Caco-2 (cell line): ENCODE measurements at regions of chr9 and their contacts with region 1.

Region 1: DNA sequence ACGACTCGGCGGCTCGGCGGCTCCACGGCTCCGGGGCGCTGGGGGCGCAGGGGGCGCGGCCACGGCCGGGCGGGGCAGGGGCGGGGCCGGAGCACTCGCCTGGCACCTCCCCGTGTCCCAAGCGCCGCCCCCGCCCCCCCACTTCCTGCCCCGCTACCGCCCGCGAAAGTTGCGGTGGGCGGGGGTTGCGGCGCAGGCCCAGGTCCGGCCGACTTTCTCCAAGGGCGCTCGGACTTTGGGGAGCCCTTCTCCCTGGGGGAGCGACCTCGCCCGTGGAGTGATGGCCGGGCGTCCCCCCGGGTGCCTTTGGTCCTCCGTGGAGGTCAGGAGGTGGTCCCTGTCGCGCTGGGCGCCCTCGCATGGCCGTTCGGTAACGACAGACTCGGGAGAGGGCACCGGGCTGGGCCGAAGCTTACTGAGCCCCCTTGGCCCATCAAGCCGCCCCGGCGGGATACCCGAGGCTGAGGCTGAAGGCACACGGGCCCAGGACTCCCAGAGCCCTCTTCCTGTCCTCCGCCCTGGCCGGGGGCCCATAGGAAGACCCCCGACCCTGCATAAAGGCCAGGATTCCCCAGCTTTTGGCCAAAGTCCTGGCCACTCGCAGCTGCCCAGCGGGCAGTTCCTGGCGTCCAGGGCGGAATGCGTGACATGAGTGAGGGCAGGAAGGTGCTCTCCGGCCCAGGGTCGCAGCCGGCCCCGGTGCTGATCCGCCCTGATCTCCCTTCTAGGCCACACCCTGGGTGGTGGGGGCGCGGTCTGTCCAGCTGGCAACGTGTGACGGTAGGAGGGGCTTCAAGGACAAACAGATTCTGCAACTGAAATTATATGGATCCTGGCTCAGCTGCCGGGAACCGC is 883 bp upstream of the VAV2 start:
- DNase-seq: peak; percentile 79 to 88
- H3K4me3 ChIP-seq: peak overlapping the region; percentile 75
- H3K4me3 Mint-ChIP-seq: peak overlapping the region; percentile 95
- H3K27ac Mint-ChIP-seq: no peak overlapping the region
- H3K4me1 ChIP-seq: peaks cover 23% of the 10 kb centered on the region
- H3K4me1 Mint-ChIP-seq: no peaks in the 10 kb centered on the region
- H3K27me3 ChIP-seq: no peaks in the 10 kb centered on the region
- H3K27me3 Mint-ChIP-seq: no peaks in the 10 kb centered on the region
- CTCF ChIP-seq: peak; percentile 29 to 32

Region 2: GRCh38 chr9:133658442-133659431 is 334.3 kb before region 1 on chr9:
- CTCF ChIA-PET with region 1: no interaction called
- POLR2A ChIA-PET with region 1: no interaction called
- intact Hi-C with region 1: no loop called
- DNase-seq: peak; percentile 67 to 78
- H3K4me3 ChIP-seq: peak overlapping the region; percentile 16
- H3K4me3 Mint-ChIP-seq: peak overlapping the region; percentile 74
- H3K27ac Mint-ChIP-seq: no peak overlapping the region
- H3K4me1 ChIP-seq: peaks cover 15% of the 10 kb centered on the region
- H3K4me1 Mint-ChIP-seq: no peaks in the 10 kb centered on the region
- H3K27me3 ChIP-seq: no peaks in the 10 kb centered on the region; the same call in 1 of the 2 replicates
- H3K27me3 Mint-ChIP-seq: no peaks in the 10 kb centered on the region
- CTCF ChIP-seq: no peak

Region 3: DNA sequence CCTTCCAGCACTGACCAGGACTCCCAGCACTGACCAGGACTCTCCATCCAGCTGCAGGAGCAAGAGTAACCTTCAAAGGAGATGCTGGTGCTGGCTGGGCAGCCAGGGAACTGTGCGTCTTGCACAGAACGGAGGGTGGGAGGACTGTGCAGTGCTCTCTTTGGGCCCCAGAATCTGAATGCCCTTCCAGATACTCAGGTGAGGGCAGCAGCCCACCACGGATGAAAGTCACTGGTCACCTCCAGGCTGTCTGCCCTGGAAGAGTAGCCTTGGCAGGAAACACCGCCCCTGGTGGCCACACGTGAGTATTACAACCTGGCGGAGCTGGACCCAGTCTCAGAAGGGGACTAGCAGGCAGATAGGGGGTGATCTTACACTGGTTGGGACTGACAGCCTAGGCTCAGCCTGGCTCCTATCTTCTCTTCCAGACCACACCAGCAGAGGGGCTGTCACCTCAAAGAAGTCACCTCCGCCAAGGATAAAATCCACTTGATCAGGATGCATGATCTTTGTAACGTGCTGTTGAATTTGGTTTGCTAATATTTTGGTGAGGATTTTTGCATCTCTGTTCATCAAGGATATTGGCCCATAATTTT is 250.1 kb before region 1 on chr9:
- CTCF ChIA-PET with region 1: interaction called, 4 read pairs
- POLR2A ChIA-PET with region 1: no interaction called
- intact Hi-C with region 1: loop called (anchors 1 kb)
- DNase-seq: peak; percentile 88 to 91
- H3K4me3 ChIP-seq: no peak overlapping the region
- H3K4me3 Mint-ChIP-seq: no peak overlapping the region
- H3K27ac Mint-ChIP-seq: no peak overlapping the region
- H3K4me1 ChIP-seq: peaks cover 13% of the 10 kb centered on the region
- H3K4me1 Mint-ChIP-seq: peaks cover 9% of the 10 kb centered on the region
- H3K27me3 ChIP-seq: no peaks in the 10 kb centered on the region
- H3K27me3 Mint-ChIP-seq: no peaks in the 10 kb centered on the region
- CTCF ChIP-seq: peak; percentile 95 to 98

Region 4: GRCh38 chr9:133792721-133793470 is 200.1 kb before region 1 on chr9:
- CTCF ChIA-PET with region 1: no interaction called
- POLR2A ChIA-PET with region 1: no interaction called
- intact Hi-C with region 1: loop called (anchors 1 kb)
- DNase-seq: peak in 1 of 2 experiments; percentile 69
- H3K4me3 ChIP-seq: no peak overlapping the region
- H3K4me3 Mint-ChIP-seq: no peak overlapping the region
- H3K27ac Mint-ChIP-seq: no peak overlapping the region
- H3K4me1 ChIP-seq: no peaks in the 10 kb centered on the region
- H3K4me1 Mint-ChIP-seq: no peaks in the 10 kb centered on the region
- H3K27me3 ChIP-seq: no peaks in the 10 kb centered on the region
- H3K27me3 Mint-ChIP-seq: no peaks in the 10 kb centered on the region
- CTCF ChIP-seq: peak; percentile 77 to 78

Region 5: DNA sequence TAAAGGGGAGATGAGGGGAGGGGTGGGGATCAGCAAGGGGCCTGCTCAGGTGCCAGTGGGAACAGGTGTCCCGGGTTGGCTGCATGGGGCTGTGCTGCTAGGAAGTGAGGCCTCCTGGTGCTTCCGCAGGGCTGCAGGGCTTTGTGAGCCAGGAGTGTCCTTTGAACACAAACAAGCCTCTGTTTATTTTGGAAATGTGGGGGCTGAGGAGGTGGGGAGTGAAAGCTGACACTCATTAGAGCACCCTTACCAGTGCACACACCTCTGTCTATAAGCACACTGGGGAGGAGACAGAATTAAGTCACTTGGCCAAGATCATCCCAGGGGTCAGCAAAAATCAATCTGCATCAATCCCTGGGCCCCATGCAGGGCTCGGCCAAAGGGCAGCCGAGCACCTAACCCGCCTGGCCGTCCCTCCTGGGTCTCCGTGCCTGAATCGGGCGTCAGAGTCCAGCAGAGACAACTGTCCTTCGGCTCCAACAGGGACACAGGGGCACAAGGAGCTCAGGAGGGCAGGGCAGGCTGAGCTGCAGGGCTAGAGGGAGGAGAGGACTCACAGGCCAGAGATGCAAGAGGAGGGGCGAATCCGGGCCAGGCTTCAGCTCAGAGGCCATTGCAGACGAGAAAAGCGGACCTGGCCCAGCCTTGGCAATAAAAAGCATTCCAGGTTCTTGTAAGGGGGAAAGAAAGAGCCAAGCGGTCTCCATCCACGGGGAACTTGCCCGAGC is 100.7 kb before region 1 on chr9:
- CTCF ChIA-PET with region 1: no interaction called
- POLR2A ChIA-PET with region 1: no interaction called
- intact Hi-C with region 1: loop called (anchors 2 kb)
- DNase-seq: peak; percentile 88 to 93
- H3K4me3 ChIP-seq: no peak overlapping the region
- H3K4me3 Mint-ChIP-seq: peak overlapping the region; percentile 74
- H3K27ac Mint-ChIP-seq: peak overlapping the region; percentile 97
- H3K4me1 ChIP-seq: peaks cover 59% of the 10 kb centered on the region
- H3K4me1 Mint-ChIP-seq: peaks cover 43% of the 10 kb centered on the region
- H3K27me3 ChIP-seq: no peaks in the 10 kb centered on the region
- H3K27me3 Mint-ChIP-seq: no peaks in the 10 kb centered on the region
- CTCF ChIP-seq: no peak

Region 6: DNA sequence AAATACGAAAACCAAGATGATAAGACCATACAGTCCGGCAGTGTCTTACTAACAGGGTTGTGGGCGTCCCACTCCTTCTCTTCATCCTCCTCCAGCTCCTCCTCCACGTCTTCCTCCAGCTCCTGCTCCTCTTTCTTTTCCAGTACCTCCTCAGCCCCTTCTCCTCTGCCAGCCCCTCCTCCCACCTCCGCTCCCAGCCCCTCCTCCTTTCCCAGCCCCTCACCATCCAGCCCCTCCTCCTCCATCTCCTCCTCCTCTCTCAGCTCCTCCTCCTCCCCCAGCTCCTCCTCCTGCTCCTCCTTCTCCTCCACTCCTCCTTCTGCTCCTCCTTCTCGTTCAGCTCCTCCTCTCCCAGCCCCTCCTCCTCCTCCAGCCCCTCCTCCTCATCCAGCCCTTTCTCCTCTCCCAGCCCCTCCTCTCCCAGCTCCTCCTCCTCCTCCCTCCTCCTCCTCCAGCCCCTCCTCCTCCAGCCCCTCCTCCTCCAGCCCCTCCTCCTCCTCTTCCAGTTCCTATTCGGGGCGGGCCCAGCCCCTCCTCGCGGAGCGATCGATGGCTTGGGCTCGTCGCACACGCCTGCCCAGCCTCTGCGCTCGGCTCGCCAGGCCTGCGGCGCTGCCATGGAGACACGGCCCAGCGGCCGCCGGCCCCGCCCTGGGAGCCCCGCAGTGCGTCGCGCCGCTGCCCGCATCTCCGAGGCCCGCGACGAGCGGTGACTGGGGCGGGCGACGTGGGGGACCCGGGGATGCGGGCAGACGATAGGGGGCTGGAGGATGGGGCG is 32.0 kb after region 1 on chr9 and contains the start of gene BRD3OS:
- CTCF ChIA-PET with region 1: interaction called, 13 read pairs
- POLR2A ChIA-PET with region 1: interaction called, 4 read pairs
- intact Hi-C with region 1: no loop called
- DNase-seq: peak; percentile 95 to 99
- H3K4me3 ChIP-seq: peak within 1 kb of the TSS; percentile 87
- H3K4me3 Mint-ChIP-seq: peak within 1 kb of the TSS; percentile 75
- H3K27ac Mint-ChIP-seq: peak within 1 kb of the TSS; percentile 35
- H3K4me1 ChIP-seq: 0 out of 2 replicates have a peak, but pooled peaks cover 4% of the 10 kb centered on the region
- H3K4me1 Mint-ChIP-seq: no peaks in the 10 kb centered on the region
- H3K27me3 ChIP-seq: no peaks in the 10 kb centered on the region
- H3K27me3 Mint-ChIP-seq: no peaks in the 10 kb centered on the region
- CTCF ChIP-seq: no peak
- total RNA-seq, gene BRD3OS: 9.1 and 9.4 TPM in 2 replicates